AG04450 (cell line): ENCODE measurements at regions of chr21 and their contacts with region 1.

Region 1: DNA sequence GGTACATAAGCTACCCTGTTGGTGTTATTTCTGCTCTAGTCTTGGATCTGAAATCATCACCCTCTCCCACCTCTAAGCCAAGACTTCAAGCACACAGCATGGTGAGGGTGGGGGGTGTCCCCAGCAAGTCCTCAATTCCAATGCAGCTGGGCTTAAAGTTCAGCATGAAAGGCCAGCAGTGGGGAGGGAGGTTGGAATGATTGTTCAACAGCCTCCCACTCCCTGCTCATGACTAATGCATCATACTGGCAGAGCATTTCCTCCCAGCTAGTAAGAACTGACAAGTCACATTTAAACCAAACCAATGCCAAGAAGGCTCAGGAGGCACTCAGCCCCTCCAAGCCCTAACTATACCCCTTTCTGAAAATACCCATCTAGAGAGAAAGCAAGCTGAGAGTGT is 50.1 kb downstream of the TIAM1 start:
- DNase-seq: peak; percentile 69
- H3K4me3 ChIP-seq: no peak overlapping the region
- H3K27ac ChIP-seq: peak overlapping the region; percentile 79
- H3K27me3 ChIP-seq: no peaks in the 10 kb centered on the region
- CTCF ChIP-seq: no peak

Region 2: GRCh38 chr21:31261759-31262158 is 32.2 kb before region 1 on chr21:
- CTCF ChIA-PET with region 1: interaction called, 12 read pairs
- POLR2A ChIA-PET with region 1: no interaction called
- DNase-seq: no peak
- H3K4me3 ChIP-seq: no peak overlapping the region
- H3K27ac ChIP-seq: no peak overlapping the region
- H3K27me3 ChIP-seq: peaks cover 15% of the 10 kb centered on the region
- CTCF ChIP-seq: no peak